ENCODE measurements at regions of chr13 and their contacts with region 1.

Region 1: DNA sequence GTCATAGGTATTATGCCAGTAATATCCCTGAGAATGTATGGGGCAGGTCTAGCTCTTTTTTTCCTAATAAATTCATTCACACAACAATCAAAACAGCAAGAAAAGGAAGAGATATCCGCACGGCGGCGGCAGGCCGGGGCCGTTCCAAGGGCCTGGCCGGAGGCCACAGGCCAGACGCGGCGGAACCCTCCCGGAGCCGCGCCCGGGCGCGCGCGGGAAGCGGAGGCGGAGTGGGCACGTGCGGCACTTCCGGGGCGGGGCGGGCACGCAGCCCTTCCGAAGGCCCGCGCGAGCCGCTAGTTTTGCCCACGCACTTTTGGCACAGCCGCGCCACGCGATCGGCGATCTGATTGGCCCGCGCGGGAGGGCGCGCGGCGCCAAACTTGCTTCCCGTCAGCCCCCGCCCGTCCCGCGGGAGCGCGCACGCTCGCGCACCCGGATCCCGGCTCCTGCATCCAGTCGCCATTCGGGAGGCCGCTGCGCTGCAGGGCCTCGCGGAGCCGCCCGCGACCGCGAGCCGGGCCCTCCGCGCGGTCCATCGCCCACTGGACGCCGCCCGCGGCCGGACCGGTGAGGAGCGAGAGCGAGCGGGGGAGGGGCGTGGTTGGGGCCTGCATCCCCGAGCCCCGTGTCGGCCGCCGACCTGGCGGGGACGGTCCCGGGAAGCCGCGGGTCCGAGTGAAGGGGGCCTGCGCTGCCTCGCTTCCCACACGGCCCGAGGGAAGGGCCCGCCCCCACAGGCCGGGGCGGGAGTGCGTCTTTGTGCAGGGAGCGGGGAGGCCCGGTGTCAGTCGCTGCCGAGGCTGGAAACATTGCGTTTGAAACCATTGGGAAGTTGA is at the start of gene CHAMP1:
- DNase-seq: peak; percentile 95 to 98
- ATAC-seq: peak; percentile 95 to 98 (median 96)
- H3K4me3 ChIP-seq: peak within 1 kb of the TSS; percentile 29 to 93 (median 83)
- H3K27ac ChIP-seq: peak within 1 kb of the TSS; percentile 87 to 98 (median 94)
- H3K4me1 ChIP-seq: peaks cover 0 to 54% (median 40%) of the 10 kb centered on the region in 9 donors
- H3K27me3 ChIP-seq: no peaks in the 10 kb centered on the region
- CTCF ChIP-seq: peak in 1 of 9 donors; percentile 3
- total RNA-seq, gene CHAMP1: 8.6 to 17.4 (median 11.4) TPM

Region 2: DNA sequence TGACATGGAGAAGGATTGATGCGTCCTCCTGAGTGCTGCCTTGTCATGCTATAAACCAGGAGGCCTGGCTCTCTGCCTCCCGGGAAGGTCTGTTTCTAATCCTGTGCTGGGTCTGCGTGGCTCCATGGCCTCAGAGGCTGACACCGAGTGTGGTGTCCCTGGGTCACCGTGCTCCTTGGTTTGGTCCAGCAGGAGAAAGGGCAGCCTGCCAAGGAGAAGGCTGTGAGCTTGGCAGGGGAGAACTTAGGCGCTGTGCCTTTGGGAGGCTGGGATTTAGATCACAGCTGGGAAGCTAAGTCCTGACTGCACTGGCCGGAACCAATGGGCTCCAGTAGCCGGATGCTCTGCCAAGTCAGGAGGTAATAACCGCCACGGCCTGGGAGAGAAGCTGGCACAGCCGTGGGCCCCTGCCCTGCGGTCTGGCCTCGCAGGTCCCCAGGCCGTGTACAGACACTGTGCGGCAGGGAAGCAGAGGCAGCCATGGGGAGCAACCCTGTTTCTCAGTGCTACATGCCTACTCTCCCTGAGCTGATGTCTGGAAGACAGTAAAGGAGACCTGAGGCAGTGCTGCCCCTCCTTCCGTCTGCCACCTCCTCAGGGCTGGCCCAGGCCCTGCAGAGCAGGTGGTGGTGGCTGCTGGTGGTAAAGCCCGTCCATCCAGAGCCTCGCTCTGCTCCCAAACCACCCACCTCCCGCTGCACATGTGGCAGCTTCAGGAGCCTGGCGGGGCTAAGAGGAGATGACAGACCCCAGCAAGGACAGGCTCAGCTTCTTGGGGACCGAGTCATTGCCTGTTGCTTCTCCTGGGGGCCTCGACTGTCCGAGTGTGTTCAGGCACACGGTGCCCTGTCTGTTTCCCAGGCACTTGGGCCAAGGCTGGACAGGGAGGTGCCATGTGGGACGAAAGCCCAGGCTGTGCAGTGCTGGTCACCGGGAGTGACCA is 385.3 kb before region 1 on chr13:
- intact Hi-C with region 1: no loop called
- DNase-seq: peak; percentile 82 to 89
- ATAC-seq: peak; percentile 74 to 89 (median 85)
- H3K4me3 ChIP-seq: no peak overlapping the region
- H3K27ac ChIP-seq: peak overlapping the region in 9 of 10 donors; percentile 26 to 82 (median 69)
- H3K4me1 ChIP-seq: peaks cover 12 to 36% (median 30%) of the 10 kb centered on the region in 9 donors
- H3K27me3 ChIP-seq: peaks cover 0 to 5% (median 0%) of the 10 kb centered on the region in 7 donors
- CTCF ChIP-seq: no peak

Region 3: DNA sequence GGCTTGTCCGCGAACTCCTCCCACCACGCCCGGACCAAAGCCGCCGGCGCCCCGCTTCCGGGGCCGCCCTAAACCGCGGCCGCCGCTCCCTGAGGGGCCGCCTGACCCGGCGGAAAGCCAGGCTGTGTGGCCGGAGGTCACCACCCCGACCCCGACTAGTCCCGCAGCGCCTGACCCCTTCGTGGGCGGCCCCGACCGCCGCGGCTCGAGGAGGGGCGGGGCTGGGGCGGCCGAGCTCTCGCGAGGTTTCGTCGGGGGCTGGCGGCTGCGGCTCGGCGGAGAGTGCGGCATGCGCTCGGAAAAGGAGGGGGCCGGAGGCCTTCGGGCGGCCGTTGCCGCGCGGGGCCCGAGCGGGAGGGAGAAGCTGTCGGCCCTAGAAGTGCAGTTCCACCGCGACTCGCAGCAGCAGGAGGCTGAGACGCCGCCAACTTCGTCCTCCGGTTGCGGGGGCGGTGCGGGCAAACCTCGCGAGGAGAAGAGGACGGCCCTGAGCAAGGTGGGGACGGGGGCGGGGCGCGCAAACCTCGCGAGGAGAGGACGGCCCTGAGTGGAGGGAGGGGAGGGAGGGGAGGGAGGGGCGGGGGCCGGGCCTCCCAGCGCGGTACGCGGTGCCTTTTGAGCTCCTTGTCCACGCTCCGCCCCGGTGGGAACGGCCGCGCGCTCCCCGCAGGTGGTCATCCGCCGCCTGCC is 32.8 kb before region 1 on chr13 and contains the start of gene UPF3A:
- intact Hi-C with region 1: loop called in 2 of 10 experiments (anchors 1 kb)
- DNase-seq: peak; percentile 93 to 94
- ATAC-seq: peak; percentile 93 to 98 (median 95)
- H3K4me3 ChIP-seq: peak within 1 kb of the TSS; percentile 46 to 77 (median 72)
- H3K27ac ChIP-seq: peak within 1 kb of the TSS; percentile 90 to 99 (median 97)
- H3K4me1 ChIP-seq: peaks cover 0 to 34% (median 15%) of the 10 kb centered on the region in 9 donors
- H3K27me3 ChIP-seq: no peaks in the 10 kb centered on the region
- CTCF ChIP-seq: no peak
- total RNA-seq, gene UPF3A: 16.6 to 29.2 (median 19.4) TPM